ENCODE measurements at regions of chr12 and their contacts with region 1.

Region 1: GRCh38 chr12:1795785-1796514 is 24.4 kb upstream of the LRTM2 start:
- DNase-seq: peak; percentile 88 to 97 (median 92)
- ATAC-seq: peak; percentile 92 to 94
- H3K4me3 Mint-ChIP-seq: peak overlapping the region; percentile 80 to 95 (median 92)
- H3K27ac Mint-ChIP-seq: peak overlapping the region; percentile 61 to 96 (median 94)
- H3K4me1 Mint-ChIP-seq: peaks cover 16 to 26% (median 20%) of the 10 kb centered on the region in 4 donors
- H3K27me3 Mint-ChIP-seq: no peaks in the 10 kb centered on the region

Region 2: DNA sequence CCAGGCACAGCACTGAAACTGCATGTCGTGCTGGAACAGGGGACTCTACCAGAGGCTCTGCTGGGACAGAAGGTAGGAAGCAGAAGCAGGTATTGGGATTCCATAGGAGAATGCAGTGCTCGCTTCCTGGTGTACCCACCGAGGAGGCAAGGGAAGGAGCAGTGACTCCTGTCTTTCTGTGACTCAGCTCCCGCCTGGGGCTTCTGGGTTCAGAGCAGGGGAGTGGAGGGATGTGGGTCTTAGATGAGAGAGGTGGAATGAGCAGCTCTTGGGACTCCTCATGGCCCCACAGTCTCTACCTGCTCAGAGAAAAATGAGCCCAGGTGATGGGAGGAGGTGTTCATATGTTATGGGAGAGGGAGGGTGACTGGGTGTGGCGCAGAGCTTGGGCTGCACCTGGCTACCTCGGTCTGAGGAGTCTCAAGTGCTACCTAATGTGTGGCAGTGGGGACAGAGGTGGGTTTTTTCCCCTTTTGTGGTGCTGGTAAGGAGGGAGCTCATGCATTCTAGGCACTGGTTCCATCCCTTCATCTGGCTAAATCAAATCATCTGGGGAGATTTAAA is 140.6 kb before region 1 on chr12:
- POLR2A ChIA-PET with region 1: interaction called, 57 read pairs
- DNase-seq: no peak
- ATAC-seq: no peak
- H3K4me3 Mint-ChIP-seq: no peak overlapping the region
- H3K27ac Mint-ChIP-seq: peak overlapping the region in 3 of 10 donors; percentile 36 to 70 (median 39)
- H3K4me1 Mint-ChIP-seq: peaks cover 0 to 4% (median 3%) of the 10 kb centered on the region in 4 donors
- H3K27me3 Mint-ChIP-seq: peaks cover 2 to 8% (median 3%) of the 10 kb centered on the region in 5 donors

Region 3: GRCh38 chr12:1661553-1662335 is 134.2 kb before region 1 on chr12:
- POLR2A ChIA-PET with region 1: interaction called, 13 read pairs
- DNase-seq: peak; percentile 69 to 92 (median 82)
- ATAC-seq: peak; percentile 86 to 87
- H3K4me3 Mint-ChIP-seq: peak overlapping the region; percentile 61 to 88 (median 78)
- H3K27ac Mint-ChIP-seq: peak overlapping the region; percentile 58 to 95 (median 86)
- H3K4me1 Mint-ChIP-seq: peaks cover 13 to 41% (median 37%) of the 10 kb centered on the region in 4 donors
- H3K27me3 Mint-ChIP-seq: no peaks in the 10 kb centered on the region

Region 4: DNA sequence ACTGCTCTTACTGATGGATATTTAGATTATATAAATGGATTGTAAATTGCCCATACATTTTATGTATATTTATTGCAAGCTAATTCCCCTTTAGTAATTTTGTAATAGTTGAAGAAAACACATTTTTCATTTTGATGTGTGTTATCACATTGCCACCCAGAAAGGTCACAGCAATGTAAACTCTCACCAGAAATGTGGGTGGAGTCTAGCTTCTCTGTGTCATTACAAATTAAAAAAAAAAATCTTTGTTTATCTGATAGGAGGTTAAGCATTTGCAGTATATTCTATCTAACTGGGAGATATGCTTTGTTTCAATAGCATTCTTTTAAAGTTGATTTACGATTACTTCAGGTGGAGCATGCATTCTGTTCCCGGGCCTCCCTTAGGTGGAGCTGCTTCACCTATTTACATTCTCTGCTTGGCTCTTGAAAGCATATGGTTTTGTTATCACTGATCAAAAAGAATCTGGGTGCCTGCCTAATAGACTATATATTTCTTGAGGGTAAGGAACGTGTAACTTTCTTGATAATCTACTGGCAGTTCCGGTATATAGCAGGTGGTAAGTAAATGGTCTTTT is 97.2 kb before region 1 on chr12:
- POLR2A ChIA-PET with region 1: no interaction called
- DNase-seq: no peak
- ATAC-seq: no peak
- H3K4me3 Mint-ChIP-seq: no peak overlapping the region
- H3K27ac Mint-ChIP-seq: peak overlapping the region in 1 of 10 donors; percentile 58
- H3K4me1 Mint-ChIP-seq: peaks cover 28 to 81% (median 66%) of the 10 kb centered on the region in 4 donors
- H3K27me3 Mint-ChIP-seq: no peaks in the 10 kb centered on the region

Region 5: GRCh38 chr12:1916371-1917171 is 120.6 kb after region 1 on chr12:
- POLR2A ChIA-PET with region 1: interaction called, 19 read pairs
- DNase-seq: peak in 1 of 10 donors; percentile 54
- ATAC-seq: no peak
- H3K4me3 Mint-ChIP-seq: peak overlapping the region in 6 of 10 donors; percentile 14 to 88 (median 63)
- H3K27ac Mint-ChIP-seq: peak overlapping the region in 6 of 10 donors; percentile 2 to 97 (median 64)
- H3K4me1 Mint-ChIP-seq: peaks cover 15 to 42% (median 24%) of the 10 kb centered on the region in 4 donors
- H3K27me3 Mint-ChIP-seq: peaks cover 0 to 9% (median 3%) of the 10 kb centered on the region in 5 donors

Region 6: DNA sequence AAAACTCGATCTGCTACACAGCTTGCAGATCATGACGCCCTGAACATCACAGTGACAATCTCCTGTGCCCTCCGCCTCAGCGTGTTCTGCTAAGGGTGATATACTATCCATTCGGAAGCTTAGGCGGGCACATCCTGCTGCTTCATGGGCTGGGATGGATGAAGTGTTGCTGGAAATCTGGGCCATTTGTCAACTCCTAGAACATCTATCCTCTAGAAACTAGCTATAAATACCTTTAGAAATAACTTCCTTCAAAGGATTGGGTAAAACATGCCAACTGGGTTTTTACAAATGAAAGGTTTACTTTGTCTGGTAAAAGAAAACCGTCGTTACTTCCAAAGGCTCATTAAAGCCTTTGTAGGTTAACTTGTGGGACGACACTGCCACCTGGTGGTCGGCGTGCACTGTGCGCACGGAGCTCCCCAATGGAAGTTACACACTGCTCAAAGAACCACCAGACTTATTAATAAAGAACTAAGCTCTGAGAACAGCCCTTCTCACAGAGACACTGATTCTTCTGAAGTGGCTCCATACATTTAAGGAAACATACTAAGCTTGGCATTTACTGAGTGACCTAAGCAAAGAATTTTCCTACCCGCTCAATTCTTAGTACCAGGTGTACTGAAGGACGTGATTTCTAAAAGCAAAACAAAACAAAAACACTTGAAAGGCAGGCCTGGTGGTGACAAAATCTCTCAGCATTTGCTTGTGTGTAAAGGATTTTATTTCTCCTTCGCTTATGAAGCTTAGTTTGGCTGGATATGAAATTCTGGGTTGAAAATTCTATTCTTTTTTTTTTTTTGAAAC is 144.1 kb after region 1 on chr12:
- POLR2A ChIA-PET with region 1: interaction called, 57 read pairs
- DNase-seq: peak; percentile 77 to 94 (median 88)
- ATAC-seq: peak; percentile 97 to 100
- H3K4me3 Mint-ChIP-seq: no peak overlapping the region
- H3K27ac Mint-ChIP-seq: peak overlapping the region in 3 of 10 donors; percentile 20 to 74 (median 67)
- H3K4me1 Mint-ChIP-seq: peaks cover 4 to 15% (median 6%) of the 10 kb centered on the region in 4 donors
- H3K27me3 Mint-ChIP-seq: no peaks in the 10 kb centered on the region